GM12878 (cell line): ENCODE measurements at regions of chr20 and their contacts with region 1.

Region 1: DNA sequence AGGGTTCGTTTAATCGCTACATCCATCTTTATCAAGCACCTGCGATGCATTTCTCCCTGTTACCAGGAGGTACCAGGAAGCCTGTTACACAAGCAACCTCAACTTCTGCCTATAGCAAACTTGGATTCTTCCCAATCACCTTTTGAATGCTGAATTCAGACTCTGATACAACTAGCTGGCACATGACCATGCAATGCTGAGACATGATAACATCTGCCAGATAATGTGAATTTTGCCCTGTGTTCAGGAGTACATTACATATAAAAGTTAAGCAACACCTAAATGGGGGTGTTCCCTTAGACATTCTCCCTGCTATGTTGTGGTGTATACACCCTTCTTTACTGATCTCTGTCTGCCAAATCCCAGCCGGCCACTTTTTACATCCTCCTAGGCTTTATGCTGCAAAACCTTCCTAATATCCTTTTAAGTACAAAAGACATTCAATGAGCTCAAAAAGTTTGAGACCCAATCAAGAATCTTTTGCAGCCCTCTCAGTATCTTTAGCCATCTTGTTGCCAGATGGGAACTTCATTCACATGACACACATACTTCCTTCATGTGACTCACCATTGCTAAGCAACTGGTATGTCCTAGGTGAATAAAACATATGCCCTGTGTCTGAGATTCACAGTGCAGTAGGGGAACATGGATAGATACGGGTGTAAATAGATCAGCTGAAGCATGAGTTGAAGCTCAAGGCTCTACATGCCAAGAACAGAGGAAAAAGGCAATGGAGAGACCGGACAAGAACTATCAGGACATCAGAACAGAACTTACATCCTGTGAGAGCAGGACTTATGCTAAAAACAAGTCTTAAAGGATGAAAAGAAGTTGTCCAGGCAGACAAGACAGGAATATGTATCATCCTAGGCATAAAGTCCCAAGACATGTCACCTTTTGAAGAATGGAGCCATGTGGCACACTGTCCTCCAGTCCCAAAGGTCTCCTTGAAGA is 84.3 kb downstream of the ZHX3 start:
- DNase-seq: no peak
- ATAC-seq: no peak
- H3K4me3 ChIP-seq: no peak overlapping the region
- H3K27ac ChIP-seq: no peak overlapping the region
- H3K4me1 ChIP-seq: no peaks in the 10 kb centered on the region
- H3K27me3 ChIP-seq: no peaks in the 10 kb centered on the region
- CTCF ChIP-seq: no peak
- EP300 ChIP-seq: no peak
- POLR2A ChIP-seq: no peak
- RAD21 ChIP-seq: no peak

Region 2: DNA sequence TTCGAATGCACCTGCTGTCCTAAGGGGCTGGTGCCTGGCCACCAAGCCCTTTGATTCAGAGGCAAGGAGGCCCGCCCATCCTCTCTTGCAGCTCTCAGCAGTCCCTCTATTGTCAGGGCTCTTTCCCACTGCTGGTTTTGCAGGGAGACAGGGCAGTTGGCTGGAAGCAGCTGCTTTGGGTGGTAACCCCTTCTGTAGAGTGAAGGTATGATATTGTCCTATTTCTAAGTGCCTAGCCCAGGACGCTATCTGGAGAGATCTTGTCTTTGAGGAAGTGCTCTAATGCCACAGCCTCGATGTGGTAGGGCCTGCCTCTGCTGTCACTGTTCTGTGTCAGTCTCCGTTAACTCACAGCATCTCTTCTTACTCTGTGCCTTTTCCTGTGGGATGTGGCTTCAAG is 90.3 kb before region 1 on chr20:
- CTCF ChIA-PET with region 1: interaction called, 18 read pairs
- POLR2A ChIA-PET with region 1: no interaction called
- RAD21 ChIA-PET with region 1: interaction called, 67 read pairs
- SMC1A ChIA-PET with region 1: interaction called, 11 read pairs
- in situ Hi-C with region 1: no loop called
- intact Hi-C with region 1: no loop called
- DNase-seq: no peak
- ATAC-seq: peak; percentile 41
- H3K4me3 ChIP-seq: 0 out of 2 replicates have a peak overlapping the region, but pooled peaks have one; percentile 26
- H3K27ac ChIP-seq: no peak overlapping the region
- H3K4me1 ChIP-seq: peaks cover 50% of the 10 kb centered on the region
- H3K27me3 ChIP-seq: no peaks in the 10 kb centered on the region
- CTCF ChIP-seq: no peak
- EP300 ChIP-seq: no peak
- POLR2A ChIP-seq: no peak
- RAD21 ChIP-seq: no peak

Region 3: GRCh38 chr20:41155261-41155660 is 78.0 kb before region 1 on chr20:
- CTCF ChIA-PET with region 1: interaction called, 7 read pairs
- POLR2A ChIA-PET with region 1: no interaction called
- RAD21 ChIA-PET with region 1: interaction called, 5 read pairs
- SMC1A ChIA-PET with region 1: interaction called, 20 read pairs
- in situ Hi-C with region 1: no loop called
- intact Hi-C with region 1: no loop called
- DNase-seq: no peak
- ATAC-seq: no peak
- H3K4me3 ChIP-seq: no peak overlapping the region
- H3K27ac ChIP-seq: no peak overlapping the region
- H3K4me1 ChIP-seq: peaks cover 54% of the 10 kb centered on the region
- H3K27me3 ChIP-seq: no peaks in the 10 kb centered on the region
- CTCF ChIP-seq: no peak
- EP300 ChIP-seq: no peak
- POLR2A ChIP-seq: no peak
- RAD21 ChIP-seq: no peak

Region 4: DNA sequence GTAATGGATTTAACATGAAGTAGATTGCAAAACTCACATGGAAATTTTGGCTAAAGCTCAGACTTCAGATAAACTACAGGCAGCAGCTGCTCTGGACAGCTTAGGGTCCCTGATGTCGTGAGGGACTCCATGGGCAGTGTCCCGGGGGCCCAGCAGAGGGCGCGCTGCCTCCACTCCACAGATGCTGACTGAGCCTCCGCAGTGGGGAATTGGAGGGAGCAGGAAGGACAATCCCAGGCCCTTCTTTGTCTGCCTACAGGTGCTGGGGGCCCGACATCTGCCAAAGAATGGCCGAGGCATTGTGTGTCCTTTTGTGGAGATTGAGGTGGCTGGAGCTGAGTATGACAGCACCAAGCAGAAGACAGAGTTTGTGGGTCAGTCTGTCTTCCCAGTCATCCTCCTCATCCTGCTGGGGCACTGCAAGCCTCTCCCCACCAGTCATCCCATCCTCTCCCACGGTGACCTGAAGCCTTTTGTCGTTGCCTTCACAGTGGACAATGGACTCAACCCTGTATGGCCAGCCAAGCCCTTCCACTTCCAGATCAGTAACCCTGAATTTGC is 60.0 kb before region 1 on chr20:
- CTCF ChIA-PET with region 1: interaction called, 52 read pairs
- POLR2A ChIA-PET with region 1: no interaction called
- RAD21 ChIA-PET with region 1: interaction called, 14 read pairs
- SMC1A ChIA-PET with region 1: interaction called, 29 read pairs
- in situ Hi-C with region 1: loop called (anchors 5 kb)
- intact Hi-C with region 1: loop called (anchors 1 kb)
- DNase-seq: no peak
- ATAC-seq: peak; percentile 97
- H3K4me3 ChIP-seq: no peak overlapping the region
- H3K27ac ChIP-seq: no peak overlapping the region
- H3K4me1 ChIP-seq: no peaks in the 10 kb centered on the region
- H3K27me3 ChIP-seq: no peaks in the 10 kb centered on the region
- CTCF ChIP-seq: peak; percentile 87 to 94 (median 92)
- EP300 ChIP-seq: no peak
- POLR2A ChIP-seq: no peak
- RAD21 ChIP-seq: peak; percentile 90

Region 5: DNA sequence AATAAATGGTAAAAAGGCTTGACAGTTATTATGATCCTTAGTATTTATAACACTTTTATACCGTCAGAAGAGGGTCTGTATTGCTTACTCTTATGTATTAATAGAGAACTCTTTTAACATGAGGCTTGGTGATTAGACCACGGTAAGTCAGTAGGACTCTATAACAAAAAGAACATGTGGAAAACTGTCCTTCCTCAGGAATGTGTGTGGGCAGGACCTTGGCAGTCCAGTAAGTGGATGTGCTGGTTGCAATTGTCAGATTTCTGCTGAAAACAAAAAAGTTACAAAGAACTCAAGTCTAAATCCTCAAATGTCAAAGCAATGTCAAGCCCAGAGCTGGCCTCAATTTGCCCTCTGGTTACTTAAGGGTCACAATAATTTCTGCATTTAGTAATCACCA is 14.8 kb before region 1 on chr20:
- CTCF ChIA-PET with region 1: interaction called, 24 read pairs
- POLR2A ChIA-PET with region 1: no interaction called
- RAD21 ChIA-PET with region 1: interaction called, 8 read pairs
- SMC1A ChIA-PET with region 1: interaction called, 10 read pairs
- in situ Hi-C with region 1: no loop called
- intact Hi-C with region 1: no loop called
- DNase-seq: no peak
- ATAC-seq: no peak
- H3K4me3 ChIP-seq: no peak overlapping the region
- H3K27ac ChIP-seq: no peak overlapping the region
- H3K4me1 ChIP-seq: no peaks in the 10 kb centered on the region
- H3K27me3 ChIP-seq: no peaks in the 10 kb centered on the region
- CTCF ChIP-seq: no peak
- EP300 ChIP-seq: no peak
- POLR2A ChIP-seq: no peak
- RAD21 ChIP-seq: no peak

Region 6: DNA sequence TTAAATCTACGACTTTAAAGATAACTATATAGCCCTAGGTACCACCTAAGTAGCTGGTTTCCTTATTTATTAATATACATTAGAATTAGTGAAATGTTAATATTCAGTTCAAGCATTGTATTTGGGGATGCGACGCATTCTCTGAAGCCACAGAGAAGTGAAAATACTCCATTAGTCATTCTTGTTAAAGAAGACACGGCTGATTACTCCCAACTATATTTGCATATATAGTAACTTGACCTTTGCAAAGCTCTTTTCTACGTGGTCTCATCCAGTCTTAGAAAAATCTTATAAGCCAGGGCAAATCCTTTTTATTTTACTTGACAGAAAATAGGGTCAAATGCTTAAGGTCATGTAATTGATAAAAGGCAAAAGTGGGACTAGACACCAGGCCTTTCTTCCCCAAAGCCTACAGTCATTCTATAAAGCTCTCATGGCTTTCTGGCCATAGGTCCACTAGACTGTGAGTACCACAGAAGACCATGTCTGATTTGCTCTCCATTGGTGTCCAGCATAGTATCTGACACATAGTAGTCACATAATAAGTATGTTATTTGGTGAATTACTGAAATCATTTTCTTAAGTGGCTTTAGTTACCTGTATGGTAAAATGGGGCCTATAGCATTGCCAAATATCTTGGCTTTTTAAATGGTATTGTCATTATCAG is 72.9 kb after region 1 on chr20:
- CTCF ChIA-PET with region 1: interaction called, 12 read pairs
- POLR2A ChIA-PET with region 1: no interaction called
- RAD21 ChIA-PET with region 1: interaction called, 4 read pairs
- SMC1A ChIA-PET with region 1: interaction called, 6 read pairs
- in situ Hi-C with region 1: no loop called
- intact Hi-C with region 1: no loop called
- DNase-seq: peak; percentile 42
- ATAC-seq: peak; percentile 98
- H3K4me3 ChIP-seq: peak overlapping the region; percentile 36; the same call in 1 of the 2 replicates
- H3K27ac ChIP-seq: peak overlapping the region; percentile 71
- H3K4me1 ChIP-seq: peaks cover 30% of the 10 kb centered on the region
- H3K27me3 ChIP-seq: no peaks in the 10 kb centered on the region
- CTCF ChIP-seq: no peak
- EP300 ChIP-seq: peak; percentile 50 to 58; a peak in 2 of 4 replicates
- POLR2A ChIP-seq: no peak
- RAD21 ChIP-seq: no peak

Region 7: DNA sequence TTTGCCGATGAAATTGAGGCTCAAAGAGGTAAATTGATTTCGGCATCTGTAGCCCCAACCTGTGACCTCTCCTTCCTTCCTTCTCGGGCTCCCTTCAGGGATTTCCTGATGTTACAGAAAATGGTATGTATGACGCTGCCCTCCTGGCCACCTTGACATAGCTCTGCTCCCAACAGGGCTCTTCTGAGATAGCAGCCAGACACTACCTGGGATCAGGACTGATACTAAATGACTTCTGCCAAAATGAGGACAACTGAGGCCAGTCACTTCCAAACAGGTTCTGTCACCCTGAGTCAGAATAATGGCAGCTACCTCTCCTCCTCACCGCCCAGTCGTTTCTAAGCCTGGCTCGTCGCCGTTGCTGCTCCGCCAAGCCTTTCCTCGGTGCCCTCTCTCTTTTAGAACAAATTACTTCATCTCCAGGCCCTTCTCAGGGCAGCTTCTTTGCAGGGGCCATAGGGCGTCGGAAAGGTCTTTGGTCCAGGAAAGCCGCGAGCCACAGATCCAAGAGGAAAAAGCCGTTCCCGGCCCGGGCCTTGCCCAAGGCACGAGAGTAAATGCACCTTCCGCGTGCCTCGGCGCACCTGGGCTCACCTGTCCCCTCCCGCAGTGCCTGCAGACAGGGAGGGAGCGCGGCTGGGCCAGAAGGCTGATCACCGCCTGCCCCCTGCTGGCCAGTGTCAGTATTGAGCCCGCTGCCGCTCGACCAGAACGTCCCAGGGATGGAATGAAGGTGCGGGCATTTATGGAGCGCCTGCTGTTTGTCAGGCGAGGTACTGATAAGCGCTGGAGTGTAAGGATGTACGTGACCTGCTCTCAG is 106.5 kb after region 1 on chr20:
- CTCF ChIA-PET with region 1: interaction called, 31 read pairs
- POLR2A ChIA-PET with region 1: no interaction called
- RAD21 ChIA-PET with region 1: interaction called, 11 read pairs
- SMC1A ChIA-PET with region 1: interaction called, 16 read pairs
- in situ Hi-C with region 1: no loop called
- intact Hi-C with region 1: loop called (anchors 5 kb)
- DNase-seq: no peak
- ATAC-seq: peak; percentile 96
- H3K4me3 ChIP-seq: peak overlapping the region; percentile 68
- H3K27ac ChIP-seq: no peak overlapping the region
- H3K4me1 ChIP-seq: peaks cover 5% of the 10 kb centered on the region
- H3K27me3 ChIP-seq: no peaks in the 10 kb centered on the region
- CTCF ChIP-seq: peak; percentile 92 to 96 (median 95)
- EP300 ChIP-seq: no peak
- POLR2A ChIP-seq: no peak
- RAD21 ChIP-seq: peak; percentile 96

Region 8: DNA sequence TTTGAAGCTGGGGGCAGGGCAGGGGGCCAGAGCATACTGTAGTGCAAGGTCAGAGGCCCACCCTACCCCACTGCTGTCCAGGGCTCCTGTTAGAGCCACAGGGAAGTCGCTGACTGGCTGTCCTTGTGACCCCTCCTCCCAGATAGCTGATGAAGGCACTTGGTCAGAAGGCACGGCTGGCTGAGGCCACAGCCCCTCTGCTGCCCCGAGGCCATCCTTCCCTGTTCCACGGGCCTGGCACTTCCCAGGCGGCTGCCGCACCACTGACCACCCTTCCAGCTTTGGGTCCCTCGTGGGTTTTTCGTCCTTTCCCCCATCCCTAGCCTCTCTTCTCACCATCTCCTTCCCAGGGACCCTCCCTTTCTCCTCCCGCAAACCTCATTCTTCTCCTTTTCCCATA is 142.6 kb after region 1 on chr20:
- CTCF ChIA-PET with region 1: no interaction called
- POLR2A ChIA-PET with region 1: no interaction called
- RAD21 ChIA-PET with region 1: no interaction called
- SMC1A ChIA-PET with region 1: no interaction called
- in situ Hi-C with region 1: no loop called
- intact Hi-C with region 1: no loop called
- DNase-seq: no peak
- ATAC-seq: no peak
- H3K4me3 ChIP-seq: no peak overlapping the region
- H3K27ac ChIP-seq: no peak overlapping the region
- H3K4me1 ChIP-seq: no peaks in the 10 kb centered on the region
- H3K27me3 ChIP-seq: 0 out of 4 replicates have a peak, but pooled peaks cover 0 to 1% of the 10 kb centered on the region in 2 experiments
- CTCF ChIP-seq: no peak
- EP300 ChIP-seq: no peak
- POLR2A ChIP-seq: no peak
- RAD21 ChIP-seq: no peak

Region 9: DNA sequence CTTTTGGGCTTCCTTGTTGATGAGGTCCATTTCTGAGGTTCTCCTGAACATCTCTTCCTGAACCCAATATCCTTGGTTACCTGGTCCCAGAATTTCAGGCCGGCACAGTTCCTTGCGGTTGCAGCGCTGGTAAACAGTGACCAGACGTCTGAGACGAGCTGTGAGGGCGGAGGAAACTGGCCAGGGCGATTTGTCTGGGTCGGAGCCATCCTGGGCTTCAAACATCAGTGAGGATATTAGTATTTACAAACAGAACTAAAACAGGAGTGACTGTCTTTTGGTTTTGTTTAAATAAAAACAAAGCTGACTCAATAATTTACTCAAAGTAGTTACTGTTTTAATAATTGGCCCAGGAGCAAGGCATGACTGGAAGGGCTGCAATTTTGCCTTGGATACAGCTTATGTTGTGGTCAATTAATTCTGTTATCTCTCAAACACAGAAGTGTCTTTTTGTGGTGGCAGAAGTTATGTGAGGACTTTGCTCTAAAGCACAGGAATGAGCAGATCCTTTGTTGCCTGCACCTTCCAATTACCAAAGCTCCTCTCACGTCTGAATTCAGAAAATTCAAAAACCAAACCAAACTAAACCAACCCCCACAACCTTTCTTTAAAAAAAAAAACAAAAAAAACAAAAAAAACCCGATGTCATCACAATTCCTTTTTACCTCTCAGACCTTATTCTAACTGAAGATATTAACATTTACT is 192.1 kb after region 1 on chr20:
- CTCF ChIA-PET with region 1: no interaction called
- POLR2A ChIA-PET with region 1: no interaction called
- RAD21 ChIA-PET with region 1: no interaction called
- SMC1A ChIA-PET with region 1: no interaction called
- in situ Hi-C with region 1: no loop called
- intact Hi-C with region 1: no loop called
- DNase-seq: no peak
- ATAC-seq: no peak
- H3K4me3 ChIP-seq: no peak overlapping the region
- H3K27ac ChIP-seq: no peak overlapping the region
- H3K4me1 ChIP-seq: 0 out of 2 replicates have a peak, but pooled peaks cover 3% of the 10 kb centered on the region
- H3K27me3 ChIP-seq: no peaks in the 10 kb centered on the region
- CTCF ChIP-seq: no peak
- EP300 ChIP-seq: no peak
- POLR2A ChIP-seq: no peak
- RAD21 ChIP-seq: no peak